Motor neuron (in vitro differentiated cells): ENCODE measurements at regions of chr7 and their contacts with region 1.

Region 1: DNA sequence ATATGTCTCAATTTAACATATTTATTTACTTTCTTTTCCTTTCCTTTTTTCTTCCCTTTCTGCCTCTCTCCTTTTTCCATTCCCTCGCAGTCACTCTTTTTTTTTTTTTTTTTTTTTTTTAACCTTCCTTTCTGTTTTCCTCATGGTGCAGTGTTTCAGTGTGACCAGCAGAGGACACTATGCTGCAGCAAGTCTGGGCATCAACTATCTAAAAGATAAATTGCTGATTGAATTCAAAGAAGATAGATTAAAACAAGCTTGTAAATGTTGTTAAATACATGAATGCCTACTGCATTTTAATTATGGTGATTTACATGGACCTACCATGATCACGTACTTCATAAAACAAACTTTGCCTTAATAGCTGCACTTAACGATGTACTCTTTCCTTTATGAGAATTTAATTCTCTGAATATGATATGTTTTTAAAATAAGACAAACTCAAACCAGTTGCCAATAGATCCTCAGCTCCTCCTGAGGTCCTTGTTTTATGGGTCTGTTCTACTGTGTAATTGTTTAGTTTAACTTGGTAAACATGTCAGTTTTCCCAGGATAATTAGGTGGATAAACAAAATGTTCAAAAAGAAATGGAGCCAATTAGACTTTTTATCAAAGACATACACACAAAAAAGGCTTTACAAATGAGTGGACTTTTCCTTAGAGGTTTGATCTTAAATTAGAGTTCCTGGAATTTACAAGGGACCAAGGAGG is 101.0 kb upstream of the AGR3 start:
- ATAC-seq: peak in 1 of 8 experiments; percentile 42
- H3K4me3 ChIP-seq: no peak overlapping the region
- H3K27ac ChIP-seq: no peak overlapping the region
- H3K4me1 ChIP-seq: peaks cover 0 to 4% of the 10 kb centered on the region in 2 donors

Region 2: DNA sequence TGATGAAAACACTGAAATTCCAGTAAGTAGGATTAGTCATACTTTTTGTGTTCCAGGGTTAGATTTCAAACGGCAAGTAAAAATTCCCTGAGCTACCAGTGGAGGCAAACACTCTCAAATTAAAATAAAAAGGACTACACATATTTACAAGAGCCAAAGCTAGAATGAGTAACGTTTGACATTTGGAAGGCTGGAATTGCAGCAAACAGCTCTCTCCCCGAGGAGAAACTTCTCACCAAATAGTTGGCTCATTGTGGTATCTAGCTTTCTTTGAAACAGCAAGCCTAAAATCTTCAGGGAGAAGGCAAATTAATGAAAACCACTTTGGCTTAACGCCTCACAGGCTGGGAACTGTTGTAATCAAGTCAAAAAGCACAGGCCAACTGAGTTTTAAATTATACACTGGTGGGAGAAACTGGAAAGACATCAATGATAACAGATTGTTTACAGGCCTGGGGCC is 669.2 kb after region 1 on chr7:
- in situ Hi-C with region 1: loop called in 1 of 9 experiments (anchors 25 kb)
- ATAC-seq: peak in 3 of 8 experiments; percentile 34 to 87 (median 85)
- H3K4me3 ChIP-seq: no peak overlapping the region
- H3K27ac ChIP-seq: no peak overlapping the region
- H3K4me1 ChIP-seq: no peaks in the 10 kb centered on the region

Region 3: GRCh38 chr7:17680943-17681351 is 698.2 kb after region 1 on chr7:
- in situ Hi-C with region 1: no loop called
- ATAC-seq: peak in 4 of 8 experiments; percentile 18 to 49 (median 36)
- H3K4me3 ChIP-seq: no peak overlapping the region
- H3K27ac ChIP-seq: no peak overlapping the region
- H3K4me1 ChIP-seq: peaks cover 5 to 10% of the 10 kb centered on the region in 2 donors

Region 4: GRCh38 chr7:17769918-17770317 is 787.1 kb after region 1 on chr7:
- in situ Hi-C with region 1: no loop called
- ATAC-seq: peak in 7 of 8 experiments; percentile 23 to 82 (median 51)
- H3K4me3 ChIP-seq: no peak overlapping the region
- H3K27ac ChIP-seq: no peak overlapping the region
- H3K4me1 ChIP-seq: no peaks in the 10 kb centered on the region

Region 5: DNA sequence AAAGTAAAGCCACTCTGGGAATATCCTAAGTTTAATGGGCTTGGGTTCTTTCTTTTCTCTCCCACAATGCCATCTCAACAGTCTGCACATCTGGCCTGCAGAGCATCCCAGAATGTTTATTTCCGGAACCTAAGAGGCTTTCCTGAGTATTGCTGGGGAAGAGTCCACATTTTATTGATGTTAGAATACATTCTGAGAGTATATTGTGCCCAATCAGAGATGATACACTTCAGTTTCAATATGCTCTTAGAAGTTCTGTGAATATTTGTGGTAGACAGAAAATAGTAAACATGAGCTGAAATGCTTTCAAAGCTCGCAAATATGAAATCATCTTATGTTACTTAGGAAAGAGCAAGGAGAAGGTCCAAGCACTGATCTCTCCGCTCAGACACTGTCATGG is 1934.0 kb after region 1 on chr7:
- in situ Hi-C with region 1: no loop called
- ATAC-seq: no peak
- H3K4me3 ChIP-seq: no peak overlapping the region
- H3K27ac ChIP-seq: no peak overlapping the region
- H3K4me1 ChIP-seq: no peaks in the 10 kb centered on the region